Activated B cell treated with CpG ODN at 0.5 μM for 24 hours (primary cell): ENCODE measurements at regions of chr7 and their contacts with region 1.

Region 1: DNA sequence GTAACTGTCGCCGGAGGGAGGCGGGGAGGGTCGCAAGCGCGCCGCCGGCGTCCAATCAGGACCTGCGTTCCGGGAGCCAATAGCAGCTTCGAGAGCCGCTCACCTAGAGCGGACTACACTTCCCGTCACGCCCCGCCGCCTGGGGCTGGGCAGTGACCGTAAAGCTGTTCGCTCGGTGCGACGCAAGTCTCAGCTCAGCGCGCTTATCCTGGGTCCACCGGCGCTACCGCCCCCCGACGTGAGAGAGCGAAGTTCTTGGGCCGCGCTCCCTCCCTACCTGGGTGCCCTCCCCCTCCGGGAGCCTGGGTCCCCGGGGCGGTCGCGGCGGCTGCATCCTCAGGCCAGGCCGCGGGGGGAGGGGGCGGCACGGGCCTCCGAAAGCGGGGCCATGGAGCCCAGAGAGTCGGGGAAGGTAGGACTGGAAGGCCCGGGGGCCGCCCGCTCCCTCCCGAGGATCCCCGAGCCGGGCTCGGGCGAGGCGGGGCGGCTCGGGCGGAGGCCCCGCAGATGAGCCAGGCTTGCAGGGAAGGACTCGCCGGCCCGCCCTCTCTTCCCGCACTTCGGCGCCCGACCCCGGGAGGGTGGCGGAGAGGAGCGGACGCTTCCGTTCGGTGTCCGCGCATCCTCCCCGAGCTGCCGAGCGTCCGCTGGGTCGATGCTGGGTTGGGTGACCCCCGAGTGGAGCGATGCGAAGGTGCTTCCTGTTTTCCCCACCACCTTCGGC is at the start of gene ZNF862:
- DNase-seq: peak; percentile 89
- ATAC-seq: peak; percentile 97
- H3K4me3 Mint-ChIP-seq: peak within 1 kb of the TSS; percentile 88
- H3K27ac Mint-ChIP-seq: peak within 1 kb of the TSS; percentile 82
- H3K4me1 Mint-ChIP-seq: peaks cover 20% of the 10 kb centered on the region
- H3K27me3 Mint-ChIP-seq: peaks cover 16% of the 10 kb centered on the region
- CTCF ChIP-seq: no peak
- total RNA-seq, gene ZNF862: 12.6 and 17.6 TPM in 2 replicates

Region 2: DNA sequence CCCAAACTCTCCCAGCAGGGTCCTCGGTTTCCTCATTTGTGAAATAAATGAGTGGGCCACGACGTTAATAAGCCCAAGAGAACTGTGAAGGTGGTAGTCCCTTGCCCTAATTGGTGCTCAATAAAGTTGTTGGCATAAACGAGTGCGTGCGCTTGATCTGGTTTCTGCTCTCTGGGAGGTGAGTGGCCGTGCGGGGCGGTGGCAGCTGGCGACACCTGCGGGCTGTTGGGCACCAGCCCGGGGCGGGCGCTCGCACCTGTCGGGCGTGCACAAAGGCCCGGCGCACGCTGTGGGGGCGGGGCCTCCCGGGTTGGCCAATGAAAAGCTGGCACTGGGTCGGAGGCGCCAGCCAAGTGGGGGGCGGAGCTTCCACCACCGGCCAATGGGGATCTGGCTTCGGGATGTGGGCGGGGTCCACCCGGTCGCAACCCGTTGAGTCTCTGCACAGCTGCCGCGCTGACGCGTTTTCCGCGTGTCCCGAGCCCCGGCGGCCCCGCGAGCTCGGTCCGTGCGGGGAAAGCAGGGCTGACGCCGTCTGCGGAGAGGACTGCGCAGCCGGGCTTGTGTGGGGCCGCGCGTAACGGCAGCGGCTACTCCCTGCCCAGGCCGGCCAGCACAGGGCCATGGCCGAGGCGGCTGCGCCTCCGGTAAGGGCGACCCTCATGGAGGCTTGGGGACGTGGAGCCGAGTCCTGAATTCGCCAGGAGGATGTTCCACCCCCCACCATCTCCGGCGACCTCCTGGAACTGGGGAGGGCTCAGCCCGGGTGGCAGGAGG is 553.3 kb before region 1 on chr7:
- CTCF ChIA-PET with region 1: no interaction called
- POLR2A ChIA-PET with region 1: interaction called, 7 read pairs
- intact Hi-C with region 1: loop called (anchors 1 kb)
- DNase-seq: peak; percentile 95
- ATAC-seq: peak; percentile 99
- H3K4me3 Mint-ChIP-seq: peak overlapping the region; percentile 89
- H3K27ac Mint-ChIP-seq: no peak overlapping the region
- H3K4me1 Mint-ChIP-seq: peaks cover 27% of the 10 kb centered on the region
- H3K27me3 Mint-ChIP-seq: no peaks in the 10 kb centered on the region
- CTCF ChIP-seq: no peak

Region 3: GRCh38 chr7:149604521-149604920 is 233.9 kb before region 1 on chr7:
- CTCF ChIA-PET with region 1: no interaction called
- POLR2A ChIA-PET with region 1: no interaction called
- intact Hi-C with region 1: no loop called
- DNase-seq: no peak
- ATAC-seq: no peak
- H3K4me3 Mint-ChIP-seq: no peak overlapping the region
- H3K27ac Mint-ChIP-seq: no peak overlapping the region
- H3K4me1 Mint-ChIP-seq: peaks cover 20% of the 10 kb centered on the region
- H3K27me3 Mint-ChIP-seq: no peaks in the 10 kb centered on the region
- CTCF ChIP-seq: no peak

Region 4: GRCh38 chr7:149624419-149625339 is 213.7 kb before region 1 on chr7:
- CTCF ChIA-PET with region 1: no interaction called
- POLR2A ChIA-PET with region 1: interaction called, 3 read pairs
- intact Hi-C with region 1: loop called (anchors 1 kb)
- DNase-seq: peak; percentile 95
- ATAC-seq: peak; percentile 92
- H3K4me3 Mint-ChIP-seq: peak overlapping the region; percentile 90
- H3K27ac Mint-ChIP-seq: peak overlapping the region; percentile 80
- H3K4me1 Mint-ChIP-seq: peaks cover 43% of the 10 kb centered on the region
- H3K27me3 Mint-ChIP-seq: peaks cover 5% of the 10 kb centered on the region
- CTCF ChIP-seq: peak; percentile 87

Region 5: GRCh38 chr7:149780636-149781419 is 57.6 kb before region 1 on chr7:
- CTCF ChIA-PET with region 1: no interaction called
- POLR2A ChIA-PET with region 1: no interaction called
- intact Hi-C with region 1: no loop called
- DNase-seq: no peak
- ATAC-seq: no peak
- H3K4me3 Mint-ChIP-seq: no peak overlapping the region
- H3K27ac Mint-ChIP-seq: no peak overlapping the region
- H3K4me1 Mint-ChIP-seq: no peaks in the 10 kb centered on the region
- H3K27me3 Mint-ChIP-seq: no peaks in the 10 kb centered on the region
- CTCF ChIP-seq: no peak

Region 6: DNA sequence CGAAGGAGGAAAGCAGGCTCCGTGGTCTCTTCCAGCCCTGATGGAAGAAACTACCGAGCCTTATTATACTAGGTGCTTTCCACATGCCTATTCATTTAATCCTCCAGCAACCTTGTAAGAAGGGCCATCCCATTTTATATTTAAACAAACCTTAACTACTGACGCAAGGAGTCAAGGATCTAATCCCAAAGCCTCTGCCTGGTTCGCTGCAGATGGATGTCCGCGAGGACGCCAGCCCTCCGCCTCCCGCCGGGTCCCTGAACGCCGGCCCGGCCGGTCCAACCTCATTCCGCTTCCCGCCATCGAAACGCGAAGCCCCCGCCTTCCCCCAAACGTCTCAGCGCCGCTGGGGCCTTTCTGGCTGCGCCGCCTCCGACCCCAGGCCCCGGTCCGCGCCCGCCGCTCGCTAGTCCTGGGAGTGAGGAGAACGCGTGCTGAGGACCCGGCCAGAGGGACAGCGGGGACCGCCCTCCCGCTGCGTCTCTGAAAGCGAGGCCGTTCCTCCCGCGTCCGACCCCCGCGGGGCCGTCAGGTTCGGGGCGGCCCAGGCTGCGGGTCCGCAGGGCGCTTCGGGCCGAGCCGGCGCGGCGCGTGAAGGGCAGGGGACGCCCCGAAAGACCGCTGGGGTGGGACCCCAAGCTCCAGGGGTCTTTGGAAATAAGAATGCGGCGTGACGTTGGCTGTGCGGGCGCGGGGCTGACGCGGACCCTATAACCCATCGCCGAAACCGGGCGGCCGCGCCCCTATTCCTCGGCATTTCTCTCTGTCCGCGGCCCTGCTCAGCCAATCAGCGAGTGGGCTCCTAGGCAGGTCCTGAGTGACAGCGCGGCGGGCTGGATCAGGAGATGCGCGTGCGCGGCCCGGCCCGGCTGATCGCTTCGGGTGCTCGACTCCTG is 34.9 kb after region 1 on chr7 and contains the start of gene ATP6V0E2:
- CTCF ChIA-PET with region 1: no interaction called
- POLR2A ChIA-PET with region 1: interaction called, 3 read pairs
- intact Hi-C with region 1: loop called (anchors 1 kb)
- DNase-seq: peak; percentile 86
- ATAC-seq: peak; percentile 95
- H3K4me3 Mint-ChIP-seq: peak within 1 kb of the TSS; percentile 86
- H3K27ac Mint-ChIP-seq: peak within 1 kb of the TSS; percentile 53
- H3K4me1 Mint-ChIP-seq: peaks cover 42% of the 10 kb centered on the region
- H3K27me3 Mint-ChIP-seq: no peaks in the 10 kb centered on the region
- CTCF ChIP-seq: no peak
- total RNA-seq, gene ATP6V0E2: 9.1 and 10.4 TPM in 2 replicates

Region 7: GRCh38 chr7:150435390-150436073 is 597.1 kb after region 1 on chr7:
- CTCF ChIA-PET with region 1: no interaction called
- POLR2A ChIA-PET with region 1: no interaction called
- intact Hi-C with region 1: loop called (anchors 10 kb)
- DNase-seq: peak; percentile 74
- ATAC-seq: peak; percentile 92
- H3K4me3 Mint-ChIP-seq: peak overlapping the region; percentile 73
- H3K27ac Mint-ChIP-seq: peak overlapping the region; percentile 96
- H3K4me1 Mint-ChIP-seq: peaks cover 63% of the 10 kb centered on the region
- H3K27me3 Mint-ChIP-seq: peaks cover 2% of the 10 kb centered on the region
- CTCF ChIP-seq: no peak

Region 8: DNA sequence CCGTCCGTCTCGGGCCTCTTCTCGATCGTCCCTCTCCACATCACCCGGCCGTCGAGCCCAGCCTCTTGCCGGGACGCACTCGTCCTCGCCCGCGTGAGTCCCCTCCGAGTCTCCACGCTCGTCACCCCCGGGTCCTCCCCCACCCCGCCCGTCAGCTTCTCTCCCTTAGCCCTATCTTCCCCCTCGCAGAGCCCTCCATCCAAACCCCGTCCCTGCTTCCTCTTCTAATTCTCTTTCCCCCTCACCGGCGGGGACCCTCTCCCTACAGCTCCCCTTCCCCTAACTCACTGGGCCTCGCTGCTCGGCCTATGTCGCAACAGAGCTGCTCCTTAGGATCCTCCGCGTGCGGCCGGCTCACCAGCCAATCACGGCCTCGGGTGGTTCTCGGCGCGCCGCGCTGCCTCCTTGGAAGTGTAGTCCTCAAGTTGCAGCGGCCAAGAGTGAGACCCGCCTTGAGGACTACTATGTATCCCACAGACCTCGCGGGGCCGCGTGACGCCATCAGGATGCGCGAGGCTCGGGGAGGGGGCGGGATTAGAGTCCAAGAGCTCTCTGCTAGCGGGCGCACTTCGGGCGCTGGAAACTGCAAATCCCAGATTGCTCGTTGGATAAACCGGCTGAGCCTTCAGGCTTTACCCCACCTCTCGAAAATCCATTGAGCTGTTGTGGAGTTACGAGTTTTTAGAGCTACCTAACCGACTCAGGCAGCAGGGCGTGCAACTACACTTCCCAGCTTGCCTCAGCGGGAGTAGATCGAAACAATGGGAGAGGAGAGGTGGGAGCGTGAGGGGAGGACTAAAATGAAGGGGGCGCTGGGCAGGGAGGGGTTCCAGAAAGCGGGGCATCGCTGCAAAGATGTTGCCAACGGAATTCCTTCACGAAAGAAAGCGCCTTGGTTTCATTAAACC is 1388.7 kb after region 1 on chr7 and contains the start of gene ABCF2:
- CTCF ChIA-PET with region 1: no interaction called
- POLR2A ChIA-PET with region 1: no interaction called
- intact Hi-C with region 1: loop called (anchors 1 kb)
- DNase-seq: peak; percentile 97
- ATAC-seq: peak; percentile 99
- H3K4me3 Mint-ChIP-seq: peak within 1 kb of the TSS; percentile 99
- H3K27ac Mint-ChIP-seq: peak within 1 kb of the TSS; percentile 91
- H3K4me1 Mint-ChIP-seq: peaks cover 41% of the 10 kb centered on the region
- H3K27me3 Mint-ChIP-seq: no peaks in the 10 kb centered on the region
- CTCF ChIP-seq: no peak
- total RNA-seq, gene ABCF2: 47.3 and 52.4 TPM in 2 replicates